ENCODE measurements at regions of chr11 and their contacts with region 1.

Region 1: GRCh38 chr11:535519-536454 is at the start of gene HRAS:
- DNase-seq: peak; percentile 98
- ATAC-seq: peak; percentile 93
- H3K4me3 Mint-ChIP-seq: peak within 1 kb of the TSS; percentile 79
- H3K27ac Mint-ChIP-seq: peak within 1 kb of the TSS; percentile 81
- H3K4me1 Mint-ChIP-seq: peaks cover 17% of the 10 kb centered on the region
- H3K27me3 Mint-ChIP-seq: no peaks in the 10 kb centered on the region
- total RNA-seq, gene HRAS: 26.8 to 41.9 TPM

Region 2: GRCh38 chr11:406978-407739 is 128.6 kb before region 1 on chr11:
- CTCF ChIA-PET with region 1: interaction called, 3 read pairs
- POLR2A ChIA-PET with region 1: no interaction called
- intact Hi-C with region 1: loop called in 1 of 2 experiments (anchors 1 kb)
- DNase-seq: peak; percentile 93
- ATAC-seq: peak; percentile 90
- H3K4me3 Mint-ChIP-seq: no peak overlapping the region
- H3K27ac Mint-ChIP-seq: no peak overlapping the region
- H3K4me1 Mint-ChIP-seq: peaks cover 5% of the 10 kb centered on the region
- H3K27me3 Mint-ChIP-seq: no peaks in the 10 kb centered on the region

Region 3: DNA sequence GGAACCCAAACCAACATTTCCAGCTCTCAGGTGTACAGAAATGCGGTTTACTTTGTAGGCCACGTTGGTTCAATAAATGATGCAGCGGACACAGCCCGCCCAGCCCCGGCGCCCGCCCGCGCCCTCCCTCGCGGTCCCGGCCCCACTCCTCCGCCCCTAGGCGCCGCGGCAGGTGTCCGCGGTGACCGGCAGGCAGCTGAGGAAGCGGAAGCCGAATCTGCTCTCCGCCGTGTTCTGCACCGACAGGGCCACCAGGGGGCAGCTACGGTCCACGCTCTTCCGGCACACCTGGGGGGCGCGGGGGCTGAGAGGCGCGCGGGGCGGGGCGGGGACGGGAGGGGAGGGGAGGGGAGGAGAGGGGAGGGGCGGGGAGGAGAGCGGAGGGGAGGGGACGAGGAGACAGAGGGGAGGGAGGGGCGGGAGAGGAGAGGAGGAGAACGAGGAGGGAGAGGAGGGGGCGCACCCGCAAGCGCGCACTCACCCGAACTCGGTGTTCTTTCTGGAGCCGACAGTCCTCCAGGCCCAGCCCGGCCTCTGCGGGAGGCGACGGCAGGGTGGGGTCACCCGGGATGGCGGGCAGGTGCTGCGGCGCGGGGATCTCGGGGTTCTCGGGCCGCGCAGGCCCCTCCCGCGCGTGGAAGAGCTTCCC is 19.2 kb after region 1 on chr11:
- CTCF ChIA-PET with region 1: interaction called, 4 read pairs
- POLR2A ChIA-PET with region 1: no interaction called
- intact Hi-C with region 1: loop called in 1 of 2 experiments (anchors 1 kb)
- DNase-seq: peak; percentile 87
- ATAC-seq: peak; percentile 85
- H3K4me3 Mint-ChIP-seq: no peak overlapping the region
- H3K27ac Mint-ChIP-seq: no peak overlapping the region
- H3K4me1 Mint-ChIP-seq: peaks cover 3% of the 10 kb centered on the region
- H3K27me3 Mint-ChIP-seq: peaks cover 2% of the 10 kb centered on the region

Region 4: GRCh38 chr11:575996-576768 is 40.4 kb after region 1 on chr11 and contains the start of gene PHRF1:
- CTCF ChIA-PET with region 1: no interaction called
- POLR2A ChIA-PET with region 1: no interaction called
- intact Hi-C with region 1: loop called in 1 of 2 experiments (anchors 1 kb)
- DNase-seq: peak; percentile 98
- ATAC-seq: peak; percentile 89
- H3K4me3 Mint-ChIP-seq: peak within 1 kb of the TSS; percentile 86
- H3K27ac Mint-ChIP-seq: peak within 1 kb of the TSS; percentile 98
- H3K4me1 Mint-ChIP-seq: peaks cover 49% of the 10 kb centered on the region
- H3K27me3 Mint-ChIP-seq: peaks cover 10% of the 10 kb centered on the region
- total RNA-seq, gene PHRF1: 40.0 to 44.5 TPM

Region 5: DNA sequence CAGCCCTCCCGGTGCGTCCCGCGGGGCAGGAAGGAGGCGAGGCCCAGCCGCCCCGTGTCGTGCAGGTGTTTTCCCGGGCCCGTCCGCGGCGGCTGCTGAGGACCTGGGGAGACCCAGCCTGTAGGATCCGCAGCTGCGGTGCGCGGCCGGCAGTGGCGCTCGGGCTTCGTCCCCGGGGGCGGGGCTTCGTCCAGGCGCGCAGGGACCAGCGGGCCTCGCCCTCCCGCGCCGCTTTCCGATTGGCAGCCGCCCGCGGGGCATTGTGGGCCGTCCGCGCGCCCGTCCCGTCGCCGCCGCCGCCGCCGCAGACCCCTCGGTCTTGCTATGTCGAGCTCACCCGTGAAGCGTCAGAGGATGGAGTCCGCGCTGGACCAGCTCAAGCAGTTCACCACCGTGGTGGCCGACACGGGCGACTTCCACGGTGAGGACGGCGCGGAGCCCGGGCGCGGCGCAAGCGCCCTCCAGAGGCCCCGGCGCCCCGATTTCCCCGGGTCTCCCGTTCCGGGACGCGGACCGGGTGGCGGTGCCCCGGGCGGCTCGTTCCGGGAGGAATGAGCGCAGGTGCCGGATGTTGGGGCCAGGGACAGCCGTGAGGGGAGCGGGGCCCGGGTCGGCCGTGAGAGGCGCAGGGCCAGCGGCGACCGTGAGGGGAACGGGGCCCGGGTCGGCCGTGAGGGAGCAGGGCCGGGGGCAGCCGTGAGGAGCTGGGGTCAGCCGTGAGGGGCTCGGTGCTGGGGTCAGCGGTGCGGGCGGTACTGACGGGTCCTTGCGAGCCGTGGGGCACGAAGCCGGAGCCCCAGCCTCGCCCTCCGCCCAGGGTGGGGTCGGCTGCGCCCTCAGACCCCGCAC is 211.6 kb after region 1 on chr11 and contains the start of gene TALDO1:
- CTCF ChIA-PET with region 1: no interaction called
- POLR2A ChIA-PET with region 1: no interaction called
- intact Hi-C with region 1: loop called in 1 of 2 experiments (anchors 1 kb)
- DNase-seq: peak; percentile 92
- ATAC-seq: peak; percentile 91
- H3K4me3 Mint-ChIP-seq: peak within 1 kb of the TSS; percentile 82
- H3K27ac Mint-ChIP-seq: peak within 1 kb of the TSS; percentile 72
- H3K4me1 Mint-ChIP-seq: peaks cover 20% of the 10 kb centered on the region
- H3K27me3 Mint-ChIP-seq: no peaks in the 10 kb centered on the region
- total RNA-seq, gene TALDO1: 239 to 246 TPM

Region 6: GRCh38 chr11:2151500-2152257 is 1615.9 kb after region 1 on chr11:
- CTCF ChIA-PET with region 1: no interaction called
- POLR2A ChIA-PET with region 1: no interaction called
- intact Hi-C with region 1: no loop called
- DNase-seq: peak; percentile 89
- ATAC-seq: peak; percentile 71
- H3K4me3 Mint-ChIP-seq: peak overlapping the region; percentile 4
- H3K27ac Mint-ChIP-seq: no peak overlapping the region
- H3K4me1 Mint-ChIP-seq: peaks cover 7% of the 10 kb centered on the region
- H3K27me3 Mint-ChIP-seq: peaks cover 33% of the 10 kb centered on the region

Measured in activated CD4-positive, alpha-beta T cell treated with anti-CD3 and anti-CD28 coated beads for 36 hours (primary cell).